ENCODE measurements at regions of chr1 and their contacts with region 1.

Region 1: DNA sequence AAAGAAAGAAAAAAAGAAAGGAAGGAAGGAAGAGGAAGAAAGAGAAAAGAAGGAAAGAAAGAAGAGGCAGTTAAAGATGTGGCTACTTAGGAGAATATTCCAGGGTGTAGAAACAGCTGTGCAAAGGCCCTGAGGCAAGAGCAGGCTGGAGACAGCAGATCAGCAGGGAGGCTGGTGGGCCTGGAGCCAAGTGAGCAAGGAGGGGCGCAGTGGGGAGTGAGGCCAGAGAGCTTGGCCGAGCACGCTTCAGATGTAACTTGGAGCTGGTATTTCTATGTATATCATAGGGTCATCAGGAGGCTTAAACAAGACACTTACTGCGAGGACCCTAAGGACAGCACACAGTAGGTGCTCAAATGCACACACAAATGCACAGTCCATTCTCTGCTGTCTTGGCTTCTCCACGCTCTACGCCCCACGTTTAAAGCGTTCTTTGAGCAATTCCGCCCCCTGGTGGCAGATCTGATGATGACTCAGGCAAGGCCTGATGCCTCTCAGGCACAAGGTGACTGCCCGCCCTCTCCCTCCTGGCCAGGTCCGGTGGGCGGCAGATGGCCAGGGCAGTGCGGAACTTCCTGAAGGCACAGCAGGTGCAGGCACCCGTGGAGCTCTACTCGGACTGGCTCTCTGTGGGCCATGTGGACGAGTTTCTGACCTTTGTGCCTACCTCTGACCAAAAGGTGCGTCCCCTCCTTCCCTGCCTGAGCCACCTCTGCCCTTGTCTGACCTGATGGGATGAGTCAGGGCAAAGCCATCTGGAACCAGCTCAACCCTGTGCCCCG is 11.9 kb upstream of the PADI3 start:
- DNase-seq: peak; percentile 83 to 92
- ATAC-seq: peak; percentile 60 to 75
- H3K4me3 ChIP-seq: no peak overlapping the region
- H3K27ac ChIP-seq: peak overlapping the region; percentile 96 to 100
- H3K4me1 ChIP-seq: peaks cover 68% of the 10 kb centered on the region
- CTCF ChIP-seq: peak; percentile 81
- EP300 ChIP-seq: no peak; a peak in 1 of 5 replicates
- POLR2A ChIP-seq: no peak
- RAD21 ChIP-seq: peak; percentile 97 to 98

Region 2: GRCh38 chr1:17125756-17126237 is 111.2 kb before region 1 on chr1:
- CTCF ChIA-PET with region 1: interaction called, 380 read pairs
- POLR2A ChIA-PET with region 1: interaction called, 20 read pairs
- DNase-seq: peak; percentile 79 to 87
- ATAC-seq: peak; percentile 90 to 92
- H3K4me3 ChIP-seq: no peak overlapping the region
- H3K27ac ChIP-seq: peak overlapping the region; percentile 85 to 95
- H3K4me1 ChIP-seq: peaks cover 51% of the 10 kb centered on the region
- CTCF ChIP-seq: peak; percentile 92
- EP300 ChIP-seq: no peak
- POLR2A ChIP-seq: no peak
- RAD21 ChIP-seq: peak; percentile 97 to 99

Region 3: DNA sequence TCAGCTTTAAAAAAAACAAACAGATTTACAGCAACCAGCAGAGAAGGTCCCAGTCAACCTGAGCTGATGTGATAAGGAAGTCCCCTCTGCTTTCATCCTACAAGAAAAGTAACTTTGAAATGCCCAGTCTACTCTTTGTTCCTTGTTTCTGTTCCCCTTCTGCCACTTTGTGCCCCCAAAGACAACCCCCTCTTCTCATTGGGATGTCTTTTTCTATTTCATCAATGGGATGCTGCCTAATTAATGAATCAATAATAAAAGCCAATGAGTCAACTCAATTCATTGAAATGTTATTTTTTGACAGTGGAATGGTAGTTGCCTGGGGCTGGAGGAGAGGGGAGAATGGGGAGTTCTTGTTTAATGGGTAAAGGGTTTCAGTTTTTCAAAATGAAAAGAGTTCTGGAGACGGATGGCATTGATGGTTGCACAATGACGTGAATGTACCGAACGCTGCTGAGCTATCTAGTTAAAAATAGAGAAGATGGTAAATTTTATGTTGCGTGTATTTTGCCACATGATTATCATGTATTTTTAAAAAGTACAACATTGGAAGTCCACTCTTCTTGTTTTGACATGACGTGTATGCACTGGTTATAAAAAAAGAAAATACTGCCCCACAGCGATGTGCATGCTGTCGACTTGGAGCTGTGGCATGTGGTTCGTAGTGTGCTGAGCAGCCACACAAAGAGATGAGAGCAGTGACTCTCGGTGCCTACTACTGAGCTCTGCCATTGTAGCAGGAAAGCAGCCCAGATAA is 95.4 kb before region 1 on chr1:
- CTCF ChIA-PET with region 1: no interaction called
- POLR2A ChIA-PET with region 1: no interaction called
- DNase-seq: no peak
- ATAC-seq: no peak
- H3K4me3 ChIP-seq: no peak overlapping the region
- H3K27ac ChIP-seq: no peak overlapping the region
- H3K4me1 ChIP-seq: no peaks in the 10 kb centered on the region
- CTCF ChIP-seq: no peak
- EP300 ChIP-seq: no peak
- POLR2A ChIP-seq: no peak
- RAD21 ChIP-seq: no peak

Region 4: GRCh38 chr1:17190010-17190995 is 46.7 kb before region 1 on chr1:
- CTCF ChIA-PET with region 1: interaction called, 13 read pairs
- POLR2A ChIA-PET with region 1: interaction called, 18 read pairs
- DNase-seq: peak in 1 of 2 experiments; percentile 82
- ATAC-seq: peak; percentile 74 to 81
- H3K4me3 ChIP-seq: no peak overlapping the region
- H3K27ac ChIP-seq: peak overlapping the region; percentile 80 to 93
- H3K4me1 ChIP-seq: peaks cover 44% of the 10 kb centered on the region
- CTCF ChIP-seq: no peak
- EP300 ChIP-seq: peak in 1 of 2 experiments; percentile 48; a peak in 1 of 5 replicates
- POLR2A ChIP-seq: no peak
- RAD21 ChIP-seq: no peak

Region 5: DNA sequence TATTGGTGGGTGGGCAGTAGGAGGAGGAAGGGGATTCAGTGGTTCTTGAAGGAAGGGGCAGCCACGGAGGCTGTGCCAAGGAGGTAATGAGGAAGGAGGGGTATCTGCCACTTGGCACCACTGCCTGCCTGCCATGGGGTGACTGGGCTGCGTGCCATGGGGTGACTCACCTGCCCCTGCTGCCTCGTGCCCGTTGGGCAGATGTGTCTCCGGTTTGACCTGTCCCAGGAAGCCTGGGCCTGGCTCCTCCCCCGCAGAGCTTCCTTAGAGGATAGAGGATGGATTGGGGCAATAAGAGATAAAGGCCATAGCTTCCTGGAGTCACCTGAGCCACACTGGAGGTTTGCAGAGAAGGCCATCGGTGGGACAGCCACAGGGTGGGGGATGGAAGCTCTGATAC is 13.6 kb after region 1 on chr1:
- CTCF ChIA-PET with region 1: interaction called, 104 read pairs
- POLR2A ChIA-PET with region 1: interaction called, 5 read pairs
- DNase-seq: peak; percentile 80 to 82
- ATAC-seq: peak; percentile 86 to 89
- H3K4me3 ChIP-seq: no peak overlapping the region
- H3K27ac ChIP-seq: peak overlapping the region; percentile 92 to 97
- H3K4me1 ChIP-seq: peaks cover 30% of the 10 kb centered on the region
- CTCF ChIP-seq: no peak
- EP300 ChIP-seq: peak in 1 of 2 experiments; percentile 37; a peak in 2 of 5 replicates
- POLR2A ChIP-seq: no peak
- RAD21 ChIP-seq: no peak

Region 6: DNA sequence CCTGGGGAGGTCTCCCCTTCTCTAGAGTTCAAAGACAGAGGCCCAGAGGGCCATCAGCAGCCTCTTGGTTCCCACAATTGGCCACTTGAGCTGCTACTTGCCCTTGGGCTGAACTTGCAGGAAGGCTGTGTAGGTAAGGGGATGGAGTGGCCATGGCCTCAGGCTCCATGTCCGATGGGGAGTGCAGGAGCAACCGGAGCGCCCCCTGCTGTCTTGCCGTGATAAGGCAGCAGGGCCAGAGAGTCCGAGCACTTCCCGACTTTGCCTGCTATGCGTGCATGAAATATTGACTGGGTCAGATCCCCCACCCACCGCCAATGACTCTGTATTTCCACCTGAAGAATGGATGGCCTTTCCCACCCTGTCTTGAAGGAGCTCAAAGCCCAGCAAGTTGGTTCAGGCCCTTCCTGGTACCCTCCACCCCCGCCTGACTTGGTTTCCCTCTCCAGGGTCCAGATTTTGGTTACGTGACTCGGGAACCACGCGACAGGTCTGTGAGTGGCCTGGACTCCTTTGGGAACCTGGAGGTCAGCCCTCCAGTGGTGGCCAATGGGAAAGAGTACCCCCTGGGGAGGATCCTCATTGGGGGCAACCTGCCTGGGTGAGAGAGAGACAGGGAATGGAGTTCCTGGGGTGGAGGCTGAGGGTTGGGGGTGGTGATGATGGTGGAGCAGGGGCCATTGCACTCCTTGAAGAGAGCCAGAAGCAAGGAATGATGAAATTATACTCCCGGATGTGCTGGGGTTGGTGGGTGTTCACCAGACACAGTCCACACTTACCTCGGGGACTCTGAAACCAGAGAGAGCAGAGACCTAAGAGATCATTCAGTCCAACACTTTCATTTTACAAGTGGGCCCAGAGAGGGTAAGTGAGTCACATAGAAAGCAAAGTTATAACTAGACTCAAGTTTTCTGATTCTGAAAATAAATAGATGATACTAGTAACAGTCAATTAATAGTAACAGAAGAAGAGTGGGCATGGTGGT is 37.5 kb after region 1 on chr1:
- CTCF ChIA-PET with region 1: interaction called, 43 read pairs
- POLR2A ChIA-PET with region 1: no interaction called
- DNase-seq: peak; percentile 69 to 76
- ATAC-seq: peak; percentile 76 to 92; a peak in 5 of 6 replicates
- H3K4me3 ChIP-seq: no peak overlapping the region
- H3K27ac ChIP-seq: peak overlapping the region; percentile 49 to 86; a peak in 5 of 6 replicates
- H3K4me1 ChIP-seq: peaks cover 51% of the 10 kb centered on the region
- CTCF ChIP-seq: peak; percentile 57
- EP300 ChIP-seq: no peak
- POLR2A ChIP-seq: no peak
- RAD21 ChIP-seq: peak; percentile 69 to 83

Region 7: GRCh38 chr1:17335821-17336710 is 99.1 kb after region 1 on chr1:
- CTCF ChIA-PET with region 1: interaction called, 28 read pairs
- POLR2A ChIA-PET with region 1: no interaction called
- DNase-seq: peak; percentile 40 to 56
- ATAC-seq: peak; percentile 95 to 97
- H3K4me3 ChIP-seq: no peak overlapping the region
- H3K27ac ChIP-seq: peak overlapping the region; percentile 23 to 79; a peak in 5 of 6 replicates
- H3K4me1 ChIP-seq: no peaks in the 10 kb centered on the region
- CTCF ChIP-seq: peak; percentile 76
- EP300 ChIP-seq: no peak
- POLR2A ChIP-seq: no peak
- RAD21 ChIP-seq: peak; percentile 78 to 82

Measured in A549 (cell line).